Ascending aorta (tissue), 2 donors: ENCODE measurements at regions of chr12 and their contacts with region 1.

Region 1: DNA sequence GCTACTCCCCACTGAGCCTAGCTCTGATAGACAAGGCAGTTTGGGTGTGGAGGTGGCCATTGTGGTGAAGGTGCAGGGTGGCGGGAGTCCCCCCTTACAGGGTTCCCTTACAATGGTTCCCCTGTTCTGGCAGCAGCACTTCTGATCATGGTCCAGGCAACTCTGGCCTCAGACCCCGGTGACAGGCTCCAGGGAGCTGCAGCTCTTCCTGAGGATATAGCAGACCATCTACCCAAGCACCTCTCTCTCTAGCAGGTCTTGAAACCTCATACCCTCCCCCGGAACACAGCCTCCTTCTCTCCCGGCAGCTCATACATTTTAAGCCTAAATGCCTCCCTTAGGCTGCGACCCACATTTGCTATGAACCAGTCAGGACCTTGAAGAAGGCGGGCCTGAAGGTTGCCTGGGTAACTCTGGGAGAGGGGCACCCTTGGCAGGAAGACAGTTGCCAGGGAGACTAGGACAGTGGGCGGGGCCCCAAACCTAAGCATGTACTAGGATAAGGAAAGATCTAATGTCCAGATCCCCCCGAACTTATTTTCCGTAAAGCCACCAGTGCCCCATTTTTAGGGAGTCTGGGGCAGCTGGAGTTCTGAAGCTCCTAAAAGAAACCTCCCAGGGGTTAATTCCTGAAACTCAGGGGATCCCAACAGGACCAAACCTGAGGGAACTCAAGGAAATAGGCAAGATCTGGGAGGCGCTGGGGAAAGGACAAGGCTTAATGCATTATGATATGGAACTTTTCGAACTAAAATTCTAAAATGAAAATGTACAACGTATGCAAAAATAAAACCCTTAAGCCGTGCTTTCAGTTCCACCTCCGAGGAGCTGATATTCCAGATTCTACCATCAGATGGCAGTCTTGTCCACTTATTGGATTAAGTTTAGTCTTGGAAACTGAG is 4.5 kb upstream of the GDF11 start:
- DNase-seq: peak; percentile 64 to 93
- H3K4me3 ChIP-seq: peak overlapping the region; percentile 65 to 73
- H3K27ac ChIP-seq: peak overlapping the region; percentile 81 to 82
- H3K4me1 ChIP-seq: peaks cover 3 to 13% of the 10 kb centered on the region in 2 donors
- H3K27me3 ChIP-seq: no peaks in the 10 kb centered on the region
- CTCF ChIP-seq: peak; percentile 82 to 89 (median 86)

Region 2: GRCh38 chr12:55659486-55660385 is 78.6 kb before region 1 on chr12:
- intact Hi-C with region 1: loop called (anchors 2 kb)
- DNase-seq: no peak
- H3K4me3 ChIP-seq: no peak overlapping the region
- H3K27ac ChIP-seq: no peak overlapping the region
- H3K4me1 ChIP-seq: no peaks in the 10 kb centered on the region
- H3K27me3 ChIP-seq: no peaks in the 10 kb centered on the region
- CTCF ChIP-seq: peak in 2 of 3 experiments; percentile 53 to 63

Region 3: DNA sequence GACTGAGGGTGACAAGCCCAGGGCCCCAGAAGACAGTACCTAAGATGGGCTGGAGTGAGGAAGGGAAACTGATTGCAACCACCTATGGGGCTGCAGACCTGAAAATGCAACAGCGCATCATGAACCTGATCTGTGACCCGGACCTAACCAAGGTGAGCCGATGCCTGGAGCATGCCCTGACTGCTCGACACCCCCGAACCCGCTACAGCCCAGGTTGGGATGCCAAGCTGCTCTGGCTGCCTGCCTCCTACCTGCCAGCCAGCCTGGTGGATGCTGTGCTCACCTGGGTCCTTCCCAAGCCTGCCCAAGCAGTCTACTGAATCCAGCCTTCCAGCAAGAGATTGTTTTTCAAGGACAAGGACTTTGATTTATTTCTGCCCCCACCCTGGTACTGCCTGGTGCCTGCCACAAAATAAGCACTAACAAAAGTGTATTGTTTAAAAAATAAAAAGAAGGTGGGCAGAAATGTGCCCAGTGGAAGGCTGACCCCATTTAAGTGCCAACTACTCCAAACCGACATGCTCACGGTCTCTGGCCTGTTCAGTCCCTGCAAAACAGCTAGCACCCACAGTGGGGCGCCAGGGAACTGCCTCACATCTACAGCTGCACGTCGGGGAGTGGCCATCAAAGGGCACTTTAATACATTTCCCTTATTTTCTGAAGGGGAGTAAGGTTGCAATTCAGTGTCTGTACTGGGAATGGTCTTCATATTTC is 14.0 kb before region 1 on chr12:
- intact Hi-C with region 1: no loop called
- DNase-seq: peak; percentile 39 to 88
- H3K4me3 ChIP-seq: no peak overlapping the region
- H3K27ac ChIP-seq: peak overlapping the region; percentile 54 to 63
- H3K4me1 ChIP-seq: peaks cover 28 to 55% of the 10 kb centered on the region in 2 donors
- H3K27me3 ChIP-seq: no peaks in the 10 kb centered on the region
- CTCF ChIP-seq: peak; percentile 64 to 69 (median 68)

Region 4: GRCh38 chr12:55797068-55797467 is 58.7 kb after region 1 on chr12:
- intact Hi-C with region 1: loop called (anchors 1 kb)
- DNase-seq: no peak
- H3K4me3 ChIP-seq: no peak overlapping the region
- H3K27ac ChIP-seq: no peak overlapping the region
- H3K4me1 ChIP-seq: no peaks in the 10 kb centered on the region
- H3K27me3 ChIP-seq: no peaks in the 10 kb centered on the region
- CTCF ChIP-seq: peak in 1 of 3 experiments; percentile 49

Region 5: DNA sequence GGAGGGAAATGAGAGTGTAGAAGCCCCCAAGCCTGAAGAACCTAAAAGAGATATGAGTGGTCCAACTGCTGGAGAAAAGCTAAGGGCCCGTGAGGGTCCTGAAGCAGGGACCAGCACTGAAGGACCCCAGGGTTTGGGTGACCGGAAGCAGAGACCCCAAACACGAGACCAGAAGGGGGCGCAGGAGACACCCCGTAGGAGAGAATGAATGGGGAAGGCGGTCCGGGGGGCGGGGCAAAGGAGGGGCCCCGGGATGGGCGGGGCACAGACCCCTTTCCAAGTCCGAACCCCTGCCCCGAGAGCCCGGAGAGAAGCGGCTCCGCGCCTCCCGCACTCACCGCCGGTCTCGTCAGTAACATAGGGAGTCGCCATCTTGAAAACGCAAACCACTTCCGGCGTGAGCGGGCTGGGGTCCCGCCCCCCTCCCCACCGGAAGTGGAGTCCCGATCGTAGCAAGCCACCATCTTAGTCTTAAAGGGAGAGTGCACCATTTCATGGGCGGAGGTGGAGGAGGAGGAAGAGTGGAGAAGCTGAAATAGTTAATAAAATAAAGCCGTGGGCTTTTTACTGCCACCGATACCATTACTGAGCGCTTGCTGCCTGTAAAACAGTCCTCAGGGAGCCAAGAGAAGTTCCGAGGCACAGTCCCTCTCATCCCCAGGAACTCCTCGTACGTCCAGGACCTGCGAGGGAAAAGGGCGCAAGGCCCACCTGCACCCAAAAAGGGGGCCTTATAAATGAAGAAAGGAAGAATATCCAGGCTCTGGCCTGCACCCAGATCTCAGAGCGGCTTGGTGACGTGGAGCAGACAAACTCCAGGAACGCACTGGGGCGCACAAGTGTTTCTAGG is 188.6 kb after region 1 on chr12:
- intact Hi-C with region 1: loop called (anchors 5 kb)
- DNase-seq: peak; percentile 78 to 96
- H3K4me3 ChIP-seq: peak overlapping the region; percentile 88 to 98
- H3K27ac ChIP-seq: peak overlapping the region; percentile 97 to 99
- H3K4me1 ChIP-seq: peaks cover 5 to 15% of the 10 kb centered on the region in 2 donors
- H3K27me3 ChIP-seq: no peaks in the 10 kb centered on the region
- CTCF ChIP-seq: peak; percentile 70 to 90 (median 80)

Region 6: DNA sequence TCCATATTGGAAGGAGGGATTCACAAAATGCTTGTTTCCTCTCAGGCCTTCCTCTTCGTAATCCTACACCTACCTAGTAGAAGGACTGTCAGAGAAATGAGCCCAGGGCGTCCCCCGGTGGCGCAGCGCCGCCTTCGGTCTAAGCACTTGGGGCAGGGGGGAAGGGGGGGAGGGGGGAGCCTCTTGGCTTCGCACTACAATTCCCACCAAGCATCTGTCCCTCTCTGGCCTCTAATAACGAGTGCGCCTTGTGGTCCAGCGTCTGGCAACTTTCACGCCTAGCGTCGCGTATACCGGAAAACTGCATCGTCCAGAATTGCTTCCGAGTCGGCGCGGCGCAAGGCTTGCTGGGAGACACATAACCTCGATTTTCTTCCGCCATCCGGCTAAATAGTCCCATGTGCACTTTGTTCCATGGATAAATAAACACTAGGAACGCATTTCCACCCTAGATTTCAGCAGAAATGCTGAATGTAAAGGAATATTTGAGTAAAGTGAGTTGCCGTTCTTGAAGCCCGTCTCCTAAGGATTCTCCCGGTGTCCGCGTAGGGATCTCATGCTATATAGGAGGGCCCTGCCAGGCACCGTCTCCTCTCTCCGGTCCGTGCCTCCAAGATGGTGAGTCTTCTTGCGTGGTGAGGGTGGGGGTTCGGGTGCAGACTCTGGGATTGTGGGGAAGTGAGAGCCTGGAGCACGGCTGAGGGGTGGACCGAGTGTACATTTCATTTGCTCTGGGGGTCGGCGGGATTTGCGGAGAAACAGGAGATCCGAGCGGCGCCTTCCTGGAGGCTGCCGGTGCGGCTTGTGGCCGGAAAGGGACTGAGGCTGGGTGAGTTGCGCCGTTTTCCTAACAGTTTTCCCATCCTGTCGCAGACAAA is 303.4 kb after region 1 on chr12 and contains the start of gene RPS26:
- intact Hi-C with region 1: loop called (anchors 5 kb)
- DNase-seq: peak; percentile 92 to 98
- H3K4me3 ChIP-seq: peak within 1 kb of the TSS; percentile 72 to 81
- H3K27ac ChIP-seq: peak within 1 kb of the TSS; percentile 82 to 93
- H3K4me1 ChIP-seq: peaks cover 5 to 11% of the 10 kb centered on the region in 2 donors
- H3K27me3 ChIP-seq: no peaks in the 10 kb centered on the region
- CTCF ChIP-seq: peak in 2 of 3 experiments; percentile 43 to 64
- total RNA-seq, gene RPS26: 877 TPM